ENCODE measurements at regions of chr6 and their contacts with region 1.

Region 1: DNA sequence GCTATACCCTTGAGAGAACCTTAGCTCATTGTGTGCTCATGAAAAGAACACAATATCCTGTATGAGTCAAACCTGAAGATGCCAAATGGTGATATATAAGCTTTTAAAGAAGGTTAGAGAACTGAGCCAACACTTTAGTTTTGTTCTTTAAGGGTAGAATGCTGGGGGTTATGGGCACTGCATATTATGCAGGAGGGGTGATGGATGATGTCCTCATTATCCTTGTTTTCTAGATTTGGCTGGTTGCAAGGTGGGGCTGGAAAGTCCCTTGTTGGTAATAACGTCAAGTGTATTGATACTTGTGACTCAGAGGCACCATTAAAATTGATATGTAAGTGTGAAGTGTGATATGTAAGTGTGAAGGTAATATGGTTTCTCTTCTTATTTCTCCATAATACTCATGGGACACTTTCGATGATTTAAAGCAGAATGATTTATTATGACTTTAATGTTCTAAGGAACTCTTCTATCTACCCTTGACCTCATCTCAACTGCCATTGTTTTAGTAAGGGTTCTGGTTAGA is 113.7 kb upstream of the DTNBP1 start:
- DNase-seq: peak; percentile 55
- ATAC-seq: peak; percentile 89
- H3K4me3 ChIP-seq: no peak overlapping the region
- H3K27ac ChIP-seq: no peak overlapping the region
- H3K4me1 ChIP-seq: peaks cover 7% of the 10 kb centered on the region
- H3K27me3 ChIP-seq: no peaks in the 10 kb centered on the region
- CTCF ChIP-seq: no peak
- EP300 ChIP-seq: peak; percentile 85 to 89; a peak in 2 of 4 replicates
- POLR2A ChIP-seq: no peak
- RAD21 ChIP-seq: 0 out of 2 replicates have a peak, but pooled peaks have one; percentile 16

Region 2: DNA sequence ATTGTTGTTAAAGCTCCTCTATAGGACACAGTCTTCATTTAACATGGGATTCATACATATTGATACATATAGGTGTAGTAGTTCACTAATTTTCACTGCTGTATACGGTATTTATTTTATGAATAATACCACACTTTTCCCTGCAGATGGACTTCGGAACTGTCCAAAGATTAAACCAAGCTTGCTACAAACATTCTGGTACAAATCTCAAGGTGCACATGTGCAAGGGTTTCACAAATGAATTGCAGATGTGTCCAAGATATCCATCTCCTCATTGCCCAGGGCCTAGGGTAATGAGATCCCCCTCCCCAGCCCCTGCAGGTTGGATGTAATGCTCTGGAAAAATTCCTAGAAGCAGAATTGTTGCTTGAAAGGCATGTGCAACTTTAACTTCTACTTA is 145.1 kb before region 1 on chr6:
- CTCF ChIA-PET with region 1: no interaction called
- POLR2A ChIA-PET with region 1: no interaction called
- RAD21 ChIA-PET with region 1: no interaction called
- SMC1A ChIA-PET with region 1: no interaction called
- in situ Hi-C with region 1: no loop called
- intact Hi-C with region 1: no loop called
- DNase-seq: no peak
- ATAC-seq: no peak
- H3K4me3 ChIP-seq: no peak overlapping the region
- H3K27ac ChIP-seq: no peak overlapping the region
- H3K4me1 ChIP-seq: no peaks in the 10 kb centered on the region
- H3K27me3 ChIP-seq: no peaks in the 10 kb centered on the region
- CTCF ChIP-seq: no peak
- EP300 ChIP-seq: no peak
- POLR2A ChIP-seq: no peak
- RAD21 ChIP-seq: no peak

Region 3: GRCh38 chr6:15682965-15683822 is 93.3 kb before region 1 on chr6:
- CTCF ChIA-PET with region 1: no interaction called
- POLR2A ChIA-PET with region 1: interaction called, 3 read pairs
- RAD21 ChIA-PET with region 1: interaction called, 10 read pairs
- SMC1A ChIA-PET with region 1: interaction called, 10 read pairs
- in situ Hi-C with region 1: no loop called
- intact Hi-C with region 1: no loop called
- DNase-seq: peak; percentile 40
- ATAC-seq: peak; percentile 93
- H3K4me3 ChIP-seq: no peak overlapping the region
- H3K27ac ChIP-seq: no peak overlapping the region
- H3K4me1 ChIP-seq: 0 out of 2 replicates have a peak, but pooled peaks cover 3% of the 10 kb centered on the region
- H3K27me3 ChIP-seq: 0 out of 4 replicates have a peak, but pooled peaks cover 0 to 3% of the 10 kb centered on the region in 2 experiments
- CTCF ChIP-seq: no peak
- EP300 ChIP-seq: peak; percentile 57 to 68; a peak in 3 of 4 replicates
- POLR2A ChIP-seq: no peak
- RAD21 ChIP-seq: no peak

Region 4: GRCh38 chr6:15715851-15716250 is 60.7 kb before region 1 on chr6:
- CTCF ChIA-PET with region 1: no interaction called
- POLR2A ChIA-PET with region 1: no interaction called
- RAD21 ChIA-PET with region 1: no interaction called
- SMC1A ChIA-PET with region 1: no interaction called
- in situ Hi-C with region 1: no loop called
- intact Hi-C with region 1: no loop called
- DNase-seq: no peak
- ATAC-seq: no peak
- H3K4me3 ChIP-seq: no peak overlapping the region
- H3K27ac ChIP-seq: no peak overlapping the region
- H3K4me1 ChIP-seq: no peaks in the 10 kb centered on the region
- H3K27me3 ChIP-seq: no peaks in the 10 kb centered on the region
- CTCF ChIP-seq: no peak
- EP300 ChIP-seq: no peak
- POLR2A ChIP-seq: no peak
- RAD21 ChIP-seq: no peak

Region 5: DNA sequence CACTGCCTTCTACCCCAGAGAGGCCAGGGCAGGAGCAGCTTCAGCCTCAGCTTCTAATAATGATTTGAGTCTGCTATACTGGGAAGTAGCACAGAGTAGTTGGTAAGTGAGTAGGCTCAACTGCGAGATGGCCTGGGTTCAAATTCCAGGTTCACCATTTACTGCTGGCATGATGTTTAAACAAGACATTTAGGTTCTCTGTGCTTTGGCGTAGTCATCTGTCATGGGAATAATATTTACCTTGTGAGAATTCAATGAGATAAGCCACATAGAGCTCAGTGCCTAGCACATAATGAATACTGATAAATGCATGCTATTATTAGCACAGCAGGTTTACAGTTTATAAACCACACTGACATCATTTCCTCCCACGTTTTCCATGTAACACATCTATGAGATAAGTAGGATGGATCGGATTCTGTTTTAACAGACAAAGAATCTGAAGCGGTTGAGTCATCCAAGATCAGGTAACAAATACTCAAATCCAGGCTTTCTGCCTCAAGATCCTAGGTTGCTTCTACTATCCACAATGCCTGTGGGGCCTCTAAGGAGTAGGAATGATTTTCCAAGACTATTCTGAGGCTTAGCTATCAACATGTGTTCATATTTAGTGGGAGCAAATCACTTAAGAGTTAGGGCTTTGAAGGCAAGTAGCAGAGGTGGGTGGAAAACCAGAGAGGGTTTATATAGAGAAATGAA is 40.8 kb before region 1 on chr6:
- CTCF ChIA-PET with region 1: interaction called, 6 read pairs
- POLR2A ChIA-PET with region 1: interaction called, 7 read pairs
- RAD21 ChIA-PET with region 1: interaction called, 18 read pairs
- SMC1A ChIA-PET with region 1: interaction called, 39 read pairs
- in situ Hi-C with region 1: no loop called
- intact Hi-C with region 1: no loop called
- DNase-seq: no peak
- ATAC-seq: peak; percentile 74
- H3K4me3 ChIP-seq: no peak overlapping the region
- H3K27ac ChIP-seq: no peak overlapping the region
- H3K4me1 ChIP-seq: peaks cover 4% of the 10 kb centered on the region; the same call in 1 of the 2 replicates
- H3K27me3 ChIP-seq: no peaks in the 10 kb centered on the region
- CTCF ChIP-seq: no peak
- EP300 ChIP-seq: peak; percentile 60 to 74; a peak in 3 of 4 replicates
- POLR2A ChIP-seq: no peak
- RAD21 ChIP-seq: no peak

Region 6: GRCh38 chr6:15823838-15824414 is 47.4 kb after region 1 on chr6:
- CTCF ChIA-PET with region 1: interaction called, 3 read pairs
- POLR2A ChIA-PET with region 1: interaction called, 5 read pairs
- RAD21 ChIA-PET with region 1: interaction called, 6 read pairs
- SMC1A ChIA-PET with region 1: interaction called, 12 read pairs
- in situ Hi-C with region 1: no loop called
- intact Hi-C with region 1: no loop called
- DNase-seq: peak; percentile 40
- ATAC-seq: peak; percentile 90
- H3K4me3 ChIP-seq: no peak overlapping the region
- H3K27ac ChIP-seq: no peak overlapping the region
- H3K4me1 ChIP-seq: peaks cover 9% of the 10 kb centered on the region
- H3K27me3 ChIP-seq: no peaks in the 10 kb centered on the region
- CTCF ChIP-seq: no peak
- EP300 ChIP-seq: peak in 1 of 2 experiments; percentile 33; a peak in 1 of 4 replicates
- POLR2A ChIP-seq: no peak
- RAD21 ChIP-seq: no peak

Region 7: GRCh38 chr6:15870333-15871043 is 94.0 kb after region 1 on chr6:
- CTCF ChIA-PET with region 1: interaction called, 5 read pairs
- POLR2A ChIA-PET with region 1: interaction called, 15 read pairs
- RAD21 ChIA-PET with region 1: interaction called, 55 read pairs
- SMC1A ChIA-PET with region 1: interaction called, 36 read pairs
- in situ Hi-C with region 1: no loop called
- intact Hi-C with region 1: loop called (anchors 5 kb)
- DNase-seq: no peak
- ATAC-seq: no peak
- H3K4me3 ChIP-seq: no peak overlapping the region
- H3K27ac ChIP-seq: no peak overlapping the region
- H3K4me1 ChIP-seq: no peaks in the 10 kb centered on the region
- H3K27me3 ChIP-seq: no peaks in the 10 kb centered on the region
- CTCF ChIP-seq: no peak
- EP300 ChIP-seq: no peak
- POLR2A ChIP-seq: no peak
- RAD21 ChIP-seq: no peak

Region 8: GRCh38 chr6:15887491-15888461 is 111.3 kb after region 1 on chr6:
- CTCF ChIA-PET with region 1: no interaction called
- POLR2A ChIA-PET with region 1: interaction called, 3 read pairs
- RAD21 ChIA-PET with region 1: interaction called, 11 read pairs
- SMC1A ChIA-PET with region 1: interaction called, 23 read pairs
- in situ Hi-C with region 1: no loop called
- intact Hi-C with region 1: no loop called
- DNase-seq: no peak
- ATAC-seq: peak; percentile 90
- H3K4me3 ChIP-seq: no peak overlapping the region
- H3K27ac ChIP-seq: no peak overlapping the region
- H3K4me1 ChIP-seq: peaks cover 10% of the 10 kb centered on the region; the same call in 1 of the 2 replicates
- H3K27me3 ChIP-seq: no peaks in the 10 kb centered on the region
- CTCF ChIP-seq: no peak
- EP300 ChIP-seq: no peak; a peak in 1 of 4 replicates
- POLR2A ChIP-seq: no peak
- RAD21 ChIP-seq: no peak

Region 9: DNA sequence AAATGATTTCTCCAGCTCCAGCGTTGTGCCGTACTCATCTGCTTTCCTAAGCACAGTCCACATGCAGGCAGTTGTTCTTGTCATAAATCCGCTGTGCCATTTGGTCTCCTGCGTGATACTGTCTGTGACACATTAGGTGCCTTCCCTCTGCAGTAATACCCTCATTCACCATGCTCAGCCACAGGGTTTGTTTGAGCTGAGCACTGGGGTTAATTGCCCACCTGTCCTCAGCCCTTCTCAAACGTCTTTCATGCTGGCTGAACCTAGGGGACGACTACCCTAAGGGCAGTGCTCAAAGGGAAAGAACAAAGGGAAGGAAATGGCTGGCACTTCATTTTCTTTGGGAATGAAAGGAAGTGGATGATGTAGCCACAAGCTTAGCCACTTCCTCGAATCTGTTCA is 288.2 kb after region 1 on chr6:
- CTCF ChIA-PET with region 1: no interaction called
- POLR2A ChIA-PET with region 1: no interaction called
- RAD21 ChIA-PET with region 1: no interaction called
- SMC1A ChIA-PET with region 1: no interaction called
- in situ Hi-C with region 1: no loop called
- intact Hi-C with region 1: no loop called
- DNase-seq: no peak
- ATAC-seq: no peak
- H3K4me3 ChIP-seq: no peak overlapping the region
- H3K27ac ChIP-seq: no peak overlapping the region
- H3K4me1 ChIP-seq: no peaks in the 10 kb centered on the region
- H3K27me3 ChIP-seq: no peaks in the 10 kb centered on the region
- CTCF ChIP-seq: no peak
- EP300 ChIP-seq: no peak
- POLR2A ChIP-seq: no peak
- RAD21 ChIP-seq: no peak

Measured in GM12878 (cell line).